Activated naive CD8-positive, alpha-beta T cell treated with anti-CD3 and anti-CD28 coated beads, Interleukin-2, amount 10 ng/mL, durations not matched to agents 7 days and 5 days (primary cell): ENCODE measurements at regions of chr15 and their contacts with region 1.

Region 1: DNA sequence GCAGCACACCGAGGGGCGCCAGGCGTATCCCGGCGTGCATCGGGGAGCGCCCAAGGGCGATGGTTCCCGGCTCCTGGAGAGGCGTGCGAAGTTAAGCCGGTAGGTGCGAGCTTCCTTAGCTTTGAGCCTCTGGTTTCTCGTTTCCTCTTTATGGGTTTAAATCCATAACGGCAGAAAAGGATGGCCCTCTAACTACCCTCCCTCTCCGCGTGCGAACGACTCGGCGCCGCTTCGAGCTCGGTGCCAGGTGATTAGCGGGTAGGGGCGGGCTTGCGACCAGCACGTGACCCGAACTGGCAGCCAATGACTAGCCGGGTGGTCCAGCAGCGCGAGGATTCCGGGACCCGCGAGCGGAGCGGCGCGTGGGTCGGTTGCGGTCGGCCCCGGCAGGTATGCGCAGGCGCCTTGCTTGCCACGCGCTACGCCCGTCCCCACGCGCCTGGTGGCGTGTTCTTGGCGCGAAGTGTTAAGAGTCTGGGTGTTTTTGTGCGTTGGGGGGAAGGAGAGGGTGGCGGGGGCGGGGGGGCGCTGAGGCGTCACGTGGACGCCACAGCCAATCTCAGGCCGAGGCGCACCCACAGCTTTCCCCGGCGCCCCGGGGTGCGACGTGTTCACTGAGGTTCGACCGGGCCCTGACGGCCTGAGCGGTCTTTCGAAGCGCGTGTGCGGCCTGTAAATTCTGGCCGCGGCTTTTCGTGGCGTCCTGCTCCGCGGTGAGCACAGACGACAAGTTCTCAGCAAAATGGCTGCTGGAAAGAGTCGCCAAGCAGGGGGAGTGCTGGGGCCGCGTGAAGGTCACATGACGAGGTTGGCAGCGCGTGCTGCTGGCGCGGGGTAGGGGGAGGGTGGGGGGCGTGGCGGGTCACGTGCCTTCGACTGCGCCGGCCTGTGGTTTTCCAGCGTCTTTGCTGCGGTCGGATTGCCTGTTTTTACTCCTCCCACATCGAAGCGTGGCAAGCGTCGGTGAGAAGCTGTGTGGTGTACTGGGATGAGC is 38.7 kb upstream of the MGA start:
- DNase-seq: peak; percentile 85
- ATAC-seq: peak; percentile 93
- H3K4me3 Mint-ChIP-seq: peak overlapping the region; percentile 83
- H3K27ac Mint-ChIP-seq: peak overlapping the region; percentile 81
- H3K4me1 Mint-ChIP-seq: peaks cover 10% of the 10 kb centered on the region
- H3K27me3 Mint-ChIP-seq: peaks cover 12% of the 10 kb centered on the region

Region 2: GRCh38 chr15:41660235-41661077 is 39.0 kb after region 1 on chr15 and contains the start of gene MGA:
- POLR2A ChIA-PET with region 1: interaction called, 25 read pairs
- DNase-seq: peak; percentile 96
- ATAC-seq: peak; percentile 86
- H3K4me3 Mint-ChIP-seq: peak within 1 kb of the TSS; percentile 82
- H3K27ac Mint-ChIP-seq: peak within 1 kb of the TSS; percentile 89
- H3K4me1 Mint-ChIP-seq: peaks cover 24% of the 10 kb centered on the region
- H3K27me3 Mint-ChIP-seq: peaks cover 27% of the 10 kb centered on the region
- total RNA-seq, gene MGA: 43.1 to 46.2 TPM